K562 (cell line): ENCODE measurements at regions of chr4 and their contacts with region 1.

Region 1: GRCh38 chr4:164731827-164732474 is 22.0 kb upstream of the SMIM31 start:
- DNase-seq: peak; percentile 57 to 67 (median 64)
- ATAC-seq: peak; percentile 79
- H3K4me3 ChIP-seq: no peak overlapping the region
- H3K27ac ChIP-seq: no peak overlapping the region
- H3K4me1 ChIP-seq: no peaks in the 10 kb centered on the region
- H3K27me3 ChIP-seq: no peaks in the 10 kb centered on the region
- CTCF ChIP-seq: peak; percentile 70 to 82 (median 77)
- EP300 ChIP-seq: no peak
- POLR2A ChIP-seq: no peak
- RAD21 ChIP-seq: peak; percentile 73 to 81

Region 2: GRCh38 chr4:163681208-163681821 is 1050.6 kb before region 1 on chr4:
- CTCF ChIA-PET with region 1: no interaction called
- POLR2A ChIA-PET with region 1: no interaction called
- in situ Hi-C with region 1: no loop called
- intact Hi-C with region 1: loop called (anchors 10 kb)
- DNase-seq: peak; percentile 26 to 46 (median 40)
- ATAC-seq: peak; percentile 78
- H3K4me3 ChIP-seq: no peak overlapping the region
- H3K27ac ChIP-seq: no peak overlapping the region
- H3K4me1 ChIP-seq: no peaks in the 10 kb centered on the region
- H3K27me3 ChIP-seq: no peaks in the 10 kb centered on the region
- CTCF ChIP-seq: peak in 2 of 3 experiments; percentile 35 to 41; a peak in 3 of 6 replicates
- EP300 ChIP-seq: no peak
- POLR2A ChIP-seq: no peak
- RAD21 ChIP-seq: peak in 1 of 2 experiments; percentile 58; a peak in 3 of 4 replicates

Region 3: DNA sequence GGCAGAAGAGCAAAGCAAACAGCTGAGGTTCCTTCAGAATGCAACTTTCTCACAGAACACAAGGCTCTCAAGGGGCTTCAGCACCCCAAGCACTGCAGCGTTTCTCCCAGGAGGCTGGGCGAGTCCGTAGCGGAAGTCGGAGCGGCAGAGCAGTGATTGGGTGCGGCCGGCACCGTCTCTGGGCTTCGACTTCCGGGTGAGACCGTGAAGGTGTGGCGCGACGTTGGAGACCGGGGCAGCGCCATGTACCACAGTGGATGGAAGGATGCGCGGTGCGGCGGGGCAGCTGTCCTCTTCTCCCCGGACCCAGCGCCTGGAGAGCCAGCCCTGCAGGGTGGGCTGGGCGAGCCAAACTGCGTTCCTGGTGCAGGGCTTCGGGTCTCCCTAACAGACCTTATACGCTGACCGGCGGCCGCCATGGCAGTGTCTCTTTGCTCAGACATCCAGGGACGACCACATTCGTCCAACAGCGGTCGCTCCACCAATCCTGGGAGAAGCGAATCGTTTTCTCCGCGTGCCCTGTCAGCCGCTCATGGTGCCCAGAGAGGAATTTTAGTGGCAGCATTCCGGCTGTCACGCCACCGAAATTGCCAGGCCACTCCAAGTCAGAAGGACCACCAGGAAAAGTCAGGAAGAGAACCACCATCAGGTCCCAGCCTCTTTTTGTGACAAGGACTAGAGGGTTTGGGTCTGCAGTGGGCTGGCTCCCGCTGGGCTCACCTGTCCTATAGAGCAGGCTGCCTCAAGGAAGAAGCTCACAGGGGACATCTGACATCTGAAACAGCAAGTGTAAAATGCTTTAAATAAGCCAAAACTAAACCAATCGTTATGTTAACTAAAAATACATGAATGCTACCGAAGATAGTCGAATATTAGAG is 225.1 kb after region 1 on chr4:
- CTCF ChIA-PET with region 1: no interaction called
- POLR2A ChIA-PET with region 1: no interaction called
- in situ Hi-C with region 1: no loop called
- intact Hi-C with region 1: no loop called
- DNase-seq: peak; percentile 17 to 55 (median 40)
- ATAC-seq: peak; percentile 99
- H3K4me3 ChIP-seq: peak overlapping the region; percentile 40
- H3K27ac ChIP-seq: no peak overlapping the region
- H3K4me1 ChIP-seq: peaks cover 0 to 8% of the 10 kb centered on the region in 2 experiments; a peak in 2 of 5 replicates
- H3K27me3 ChIP-seq: peaks cover 2 to 8% of the 10 kb centered on the region in 2 experiments; a peak in 2 of 5 replicates
- CTCF ChIP-seq: no peak
- EP300 ChIP-seq: no peak
- POLR2A ChIP-seq: no peak
- RAD21 ChIP-seq: no peak